Gastrocnemius medialis (tissue), 4 donors: ENCODE measurements at regions of chr15 and their contacts with region 1.

Region 1: DNA sequence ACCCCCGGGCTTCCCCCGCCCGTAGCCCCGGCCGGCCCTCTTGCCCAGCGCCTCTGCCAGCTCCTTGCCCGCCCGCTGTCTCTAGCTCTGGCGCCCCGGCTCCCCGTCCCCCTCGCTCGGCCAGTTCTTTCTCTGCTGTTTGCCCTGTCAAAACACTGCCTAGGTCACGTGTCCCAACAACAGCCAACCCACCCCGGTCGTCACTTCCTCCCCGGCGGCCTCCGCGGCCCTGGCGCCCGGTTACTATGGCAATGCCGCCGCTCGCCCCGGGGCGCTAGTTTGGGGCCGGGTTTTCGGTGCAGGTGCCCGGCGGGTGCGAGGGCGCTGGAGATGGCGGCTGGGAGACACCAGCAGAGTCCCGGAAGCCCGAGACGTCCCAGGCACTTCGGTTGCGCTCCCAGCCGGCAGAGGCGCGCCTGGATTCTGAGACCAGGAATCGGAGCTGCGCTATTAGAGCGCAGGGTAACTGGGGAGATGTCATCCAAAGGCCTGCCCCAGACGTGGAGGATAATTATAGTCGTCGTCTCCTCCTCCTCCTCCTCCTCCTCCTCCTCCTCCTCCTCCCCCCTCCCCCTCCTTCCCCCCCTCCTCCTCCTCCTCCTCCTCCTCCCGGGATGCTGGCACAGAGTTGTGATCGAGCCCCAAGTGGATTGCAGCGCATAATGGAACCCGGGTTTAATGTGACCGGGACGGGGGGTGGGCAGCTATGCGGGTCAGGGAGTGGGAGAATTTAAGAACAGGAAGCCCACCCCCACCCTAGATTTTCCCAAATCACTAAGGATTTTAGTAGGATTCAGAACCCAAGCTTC is at the start of gene ATOSA:
- DNase-seq: peak; percentile 94 to 95
- ATAC-seq: peak; percentile 77 to 85
- H3K4me3 ChIP-seq: peak within 1 kb of the TSS; percentile 92 to 98 (median 95)
- H3K27ac ChIP-seq: peak within 1 kb of the TSS; percentile 98 to 100 (median 99)
- H3K4me1 ChIP-seq: peaks cover 26 to 41% of the 10 kb centered on the region in 2 donors
- H3K27me3 ChIP-seq: no peaks in the 10 kb centered on the region
- CTCF ChIP-seq: peak in 4 of 5 experiments; percentile 10 to 20 (median 14)
- POLR2A ChIP-seq: peak; percentile 84 to 94
- total RNA-seq, gene ATOSA: 61.9 to 491 (median 137) TPM

Region 2: GRCh38 chr15:52337198-52337853 is 342.1 kb before region 1 on chr15:
- in situ Hi-C with region 1: no loop called
- intact Hi-C with region 1: loop called (anchors 5 kb)
- DNase-seq: no peak
- ATAC-seq: peak; percentile 44 to 71
- H3K4me3 ChIP-seq: no peak overlapping the region
- H3K27ac ChIP-seq: peak overlapping the region; percentile 40 to 70 (median 56)
- H3K4me1 ChIP-seq: peaks cover 8 to 22% of the 10 kb centered on the region in 2 donors
- H3K27me3 ChIP-seq: no peaks in the 10 kb centered on the region
- CTCF ChIP-seq: no peak
- POLR2A ChIP-seq: no peak

Region 3: DNA sequence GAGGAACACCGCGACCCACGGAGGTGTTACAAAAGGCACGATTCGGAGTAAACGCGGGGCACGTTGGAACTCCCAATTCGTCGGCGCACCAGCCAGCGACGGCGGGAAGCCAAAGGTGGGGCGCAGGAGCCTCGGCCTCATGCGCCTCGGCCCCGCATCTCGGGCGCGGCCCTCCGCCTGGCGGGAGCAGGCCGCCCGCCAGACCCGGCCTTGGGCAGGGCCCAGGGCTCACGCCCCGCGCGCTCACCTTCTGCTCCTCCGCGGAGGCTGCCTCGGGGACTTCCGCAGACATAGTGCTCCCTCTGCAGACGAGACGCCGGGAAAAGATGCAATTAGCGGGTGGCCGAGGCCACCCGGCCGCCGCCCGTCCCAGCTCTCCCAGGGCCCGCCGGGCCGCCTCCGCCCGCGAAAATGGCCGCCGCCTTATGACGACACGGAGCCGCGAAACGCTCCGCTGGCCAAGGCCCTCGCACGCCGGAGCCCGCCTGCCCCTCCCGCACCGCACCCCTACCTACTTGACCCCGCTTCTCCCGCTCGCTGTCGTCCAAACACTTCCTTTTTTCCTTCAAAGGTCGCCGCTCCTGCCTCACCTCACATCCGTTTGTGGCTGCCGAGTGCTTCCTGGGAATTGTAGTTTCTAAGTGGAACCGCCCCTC is 110.7 kb before region 1 on chr15 and contains the start of gene ARPP19:
- in situ Hi-C with region 1: loop called in 1 of 4 experiments (anchors 25 kb)
- intact Hi-C with region 1: loop called (anchors 1 kb)
- DNase-seq: peak; percentile 93 to 96
- ATAC-seq: peak; percentile 85 to 87
- H3K4me3 ChIP-seq: peak within 1 kb of the TSS; percentile 58 to 87 (median 75)
- H3K27ac ChIP-seq: peak within 1 kb of the TSS; percentile 86 to 97 (median 92)
- H3K4me1 ChIP-seq: peaks cover 25 to 29% of the 10 kb centered on the region in 2 donors
- H3K27me3 ChIP-seq: no peaks in the 10 kb centered on the region
- CTCF ChIP-seq: peak in 3 of 5 experiments; percentile 11 to 35 (median 17)
- POLR2A ChIP-seq: peak; percentile 93 to 97
- total RNA-seq, gene ARPP19: 153 to 428 (median 207) TPM

Region 4: DNA sequence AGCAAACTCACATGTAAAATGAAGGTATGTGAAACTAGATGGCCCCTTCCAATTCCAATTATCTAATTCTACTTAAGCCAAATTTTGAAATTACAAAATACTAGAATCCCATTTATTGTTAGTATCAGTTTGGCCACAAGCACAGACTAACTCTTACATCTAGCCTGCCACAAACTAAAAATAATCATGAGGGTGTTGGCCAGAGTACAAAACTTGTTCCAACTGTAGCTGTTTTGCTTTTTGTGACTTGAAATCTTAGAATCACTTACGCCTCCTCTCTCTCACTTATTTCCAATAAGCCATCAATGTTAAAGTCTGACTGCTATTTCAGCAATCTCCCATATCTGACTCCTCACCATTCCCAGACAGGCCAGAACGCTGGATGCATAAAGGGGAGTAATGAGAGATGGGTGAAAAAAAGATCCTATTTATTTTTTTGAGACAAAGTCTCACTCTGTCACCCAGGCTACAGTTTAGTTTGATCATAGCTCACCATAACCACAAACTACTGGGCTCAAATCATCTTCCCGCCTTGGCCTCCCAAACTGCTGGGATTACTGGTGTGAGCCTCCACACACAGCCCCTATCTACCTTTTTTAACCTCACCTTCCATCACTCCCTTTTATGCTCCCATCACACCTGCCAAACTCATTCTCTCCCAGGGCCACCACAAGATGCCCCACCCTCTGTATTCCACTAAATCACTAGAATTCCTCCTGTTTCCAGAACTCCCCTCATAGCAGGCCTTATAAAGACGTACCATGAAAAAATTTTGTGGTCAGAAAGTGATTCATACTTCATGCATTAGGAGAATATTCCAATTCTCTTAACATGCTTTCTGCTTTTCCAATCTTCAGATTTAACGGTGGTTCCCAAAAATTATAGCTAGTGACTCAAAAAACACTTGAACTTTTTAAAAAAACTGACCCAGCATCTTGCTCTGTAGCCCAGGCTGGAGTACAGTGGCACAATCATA is 36.8 kb before region 1 on chr15:
- in situ Hi-C with region 1: no loop called
- intact Hi-C with region 1: loop called (anchors 5 kb)
- DNase-seq: no peak
- ATAC-seq: peak in 1 of 2 donors; percentile 7
- H3K4me3 ChIP-seq: no peak overlapping the region
- H3K27ac ChIP-seq: peak overlapping the region; percentile 79 to 89 (median 82)
- H3K4me1 ChIP-seq: peaks cover 41 to 61% of the 10 kb centered on the region in 2 donors
- H3K27me3 ChIP-seq: no peaks in the 10 kb centered on the region
- CTCF ChIP-seq: no peak
- POLR2A ChIP-seq: no peak

Region 5: DNA sequence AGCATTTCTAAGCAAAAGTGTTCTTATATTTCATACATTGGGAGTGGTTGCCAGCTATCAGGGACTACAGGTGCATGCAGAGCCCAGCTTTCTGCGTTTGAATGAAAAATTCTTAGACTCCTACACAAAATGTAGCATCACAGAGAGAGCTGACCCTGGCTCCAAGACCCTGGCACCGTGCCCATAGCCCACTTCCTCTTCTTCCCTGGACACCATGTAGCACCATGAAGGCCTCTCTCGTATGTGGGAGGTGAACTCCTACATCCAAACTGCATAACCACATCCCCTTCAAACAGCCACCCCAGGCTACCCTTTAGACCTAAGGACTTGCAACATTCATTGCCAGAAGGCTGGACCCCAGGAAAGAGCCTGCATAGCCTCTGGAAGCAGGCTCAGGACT is 35.5 kb after region 1 on chr15:
- in situ Hi-C with region 1: no loop called
- intact Hi-C with region 1: no loop called
- DNase-seq: no peak
- ATAC-seq: no peak
- H3K4me3 ChIP-seq: no peak overlapping the region
- H3K27ac ChIP-seq: no peak overlapping the region
- H3K4me1 ChIP-seq: no peaks in the 10 kb centered on the region
- H3K27me3 ChIP-seq: no peaks in the 10 kb centered on the region
- CTCF ChIP-seq: no peak
- POLR2A ChIP-seq: no peak

Region 6: DNA sequence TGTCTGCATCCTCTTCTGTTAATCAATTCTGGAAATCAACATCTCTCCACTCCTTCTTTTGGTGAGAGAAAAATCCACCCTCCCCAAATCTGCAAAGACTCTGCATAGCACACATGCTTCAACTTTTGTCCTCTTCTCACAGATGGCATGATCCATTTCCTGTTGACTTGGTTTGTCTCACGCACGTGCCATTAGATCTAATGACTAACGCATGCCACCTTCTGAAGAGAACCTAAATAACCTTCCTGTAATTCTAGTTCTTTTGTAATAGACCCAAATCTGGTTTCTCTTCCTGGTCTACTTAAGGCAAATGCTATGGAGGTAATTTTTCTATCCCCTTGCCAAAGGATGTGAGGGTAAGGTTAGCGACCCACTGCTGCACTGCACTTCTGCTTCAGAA is 50.7 kb after region 1 on chr15:
- in situ Hi-C with region 1: loop called in 1 of 4 experiments (anchors 5 kb)
- intact Hi-C with region 1: loop called (anchors 1 kb)
- DNase-seq: peak; percentile 43 to 58
- ATAC-seq: peak; percentile 28 to 68
- H3K4me3 ChIP-seq: no peak overlapping the region
- H3K27ac ChIP-seq: peak overlapping the region; percentile 68 to 89 (median 86)
- H3K4me1 ChIP-seq: peaks cover 45 to 60% of the 10 kb centered on the region in 2 donors
- H3K27me3 ChIP-seq: no peaks in the 10 kb centered on the region
- CTCF ChIP-seq: no peak
- POLR2A ChIP-seq: peak in 1 of 2 donors; percentile 29

Region 7: DNA sequence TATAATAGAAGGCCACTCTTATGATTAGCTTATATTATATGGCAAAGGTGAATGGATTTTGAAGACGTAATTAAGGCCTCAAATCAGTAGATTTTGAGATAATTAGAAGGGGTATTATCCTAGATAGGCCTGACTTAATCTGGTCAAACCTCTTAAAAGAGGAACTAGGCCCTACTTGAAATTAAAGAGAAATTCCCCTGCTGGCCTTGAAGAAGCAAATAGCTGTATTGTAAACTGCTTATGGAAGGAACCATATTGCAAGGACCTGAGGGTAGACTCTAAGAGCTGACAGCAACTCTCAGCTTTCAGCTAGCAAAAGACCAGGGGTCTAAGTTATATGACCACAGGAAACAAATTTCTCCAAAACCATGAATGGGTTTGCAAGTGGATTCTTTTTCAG is 329.7 kb after region 1 on chr15:
- in situ Hi-C with region 1: no loop called
- intact Hi-C with region 1: no loop called
- DNase-seq: no peak
- ATAC-seq: no peak
- H3K4me3 ChIP-seq: no peak overlapping the region
- H3K27ac ChIP-seq: no peak overlapping the region
- H3K4me1 ChIP-seq: no peaks in the 10 kb centered on the region
- H3K27me3 ChIP-seq: no peaks in the 10 kb centered on the region
- CTCF ChIP-seq: no peak
- POLR2A ChIP-seq: no peak